OCI-LY7 (cell line): ENCODE measurements at regions of chr2 and their contacts with region 1.

Region 1: GRCh38 chr2:98548920-98549818 is 59.1 kb downstream of the COA5 start:
- DNase-seq: peak; percentile 74
- H3K4me3 ChIP-seq: peak overlapping the region; percentile 29
- H3K27ac ChIP-seq: peak overlapping the region; percentile 81
- H3K4me1 ChIP-seq: peaks cover 55% of the 10 kb centered on the region
- CTCF ChIP-seq: no peak

Region 2: DNA sequence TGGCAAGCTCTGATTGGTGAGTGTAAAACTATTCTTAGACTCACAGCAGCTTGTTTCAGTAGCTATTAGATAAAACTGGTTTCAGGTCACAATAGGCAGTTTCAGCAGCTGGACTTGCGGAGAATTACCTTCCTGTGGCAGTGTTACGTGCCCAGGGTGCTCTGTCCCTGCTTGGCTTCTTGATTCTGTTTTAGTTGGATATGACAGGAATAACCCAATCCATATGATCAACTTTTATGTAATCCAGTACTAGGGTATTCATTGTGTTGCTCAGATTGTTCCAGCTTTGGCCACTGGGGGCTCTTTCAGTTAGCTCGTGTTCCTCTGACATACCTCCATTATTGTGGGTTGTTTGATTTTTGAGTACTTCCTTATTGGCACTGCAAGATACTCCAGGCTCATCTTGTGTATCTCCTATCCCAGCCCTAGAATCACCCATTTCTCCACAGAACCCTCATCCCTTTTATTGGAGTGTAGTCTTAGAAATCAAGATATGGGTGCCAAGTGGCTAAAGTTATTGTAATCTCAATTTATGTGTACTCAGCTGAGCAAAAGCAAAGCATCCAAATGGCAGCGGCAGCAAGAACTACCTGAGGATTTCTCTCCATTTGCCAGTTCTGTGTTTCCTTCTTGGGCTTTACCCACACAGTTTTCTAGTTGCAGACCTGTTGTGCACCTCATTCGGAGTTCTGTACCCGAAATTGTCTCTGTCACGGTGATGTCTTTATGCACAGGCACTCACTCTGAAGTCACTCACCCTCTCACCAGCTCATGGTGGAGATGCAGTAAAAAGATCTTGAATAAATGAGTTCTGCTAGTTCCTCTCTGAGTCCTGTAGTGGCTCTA is 61.1 kb before region 1 on chr2:
- CTCF ChIA-PET with region 1: no interaction called
- POLR2A ChIA-PET with region 1: no interaction called
- intact Hi-C with region 1: loop called (anchors 5 kb)
- DNase-seq: peak; percentile 59
- H3K4me3 ChIP-seq: no peak overlapping the region
- H3K27ac ChIP-seq: no peak overlapping the region
- H3K4me1 ChIP-seq: peaks cover 37% of the 10 kb centered on the region
- CTCF ChIP-seq: peak; percentile 83

Region 3: DNA sequence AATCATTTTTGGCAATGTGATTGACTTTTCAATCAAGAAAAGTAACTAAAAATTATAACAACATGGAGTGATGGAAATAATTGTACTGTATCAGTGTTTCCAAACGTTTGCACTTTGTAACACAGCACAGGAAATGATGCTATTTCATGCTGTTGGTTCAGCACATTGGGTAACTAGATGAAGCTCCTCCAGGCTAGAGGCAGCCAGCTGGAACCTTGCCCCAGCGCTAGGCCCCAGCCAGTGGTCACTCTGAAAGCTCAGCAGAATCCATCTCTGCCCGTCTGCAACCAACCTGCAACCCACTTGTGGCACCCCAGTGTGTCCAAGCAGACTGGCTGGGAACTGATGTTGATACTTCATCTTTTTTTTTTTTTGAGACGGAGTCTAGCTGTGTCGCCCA is 74.5 kb after region 1 on chr2:
- CTCF ChIA-PET with region 1: no interaction called
- POLR2A ChIA-PET with region 1: no interaction called
- intact Hi-C with region 1: no loop called
- DNase-seq: peak; percentile 35
- H3K4me3 ChIP-seq: no peak overlapping the region
- H3K27ac ChIP-seq: no peak overlapping the region
- H3K4me1 ChIP-seq: peaks cover 18% of the 10 kb centered on the region
- CTCF ChIP-seq: no peak